Prostate gland (tissue), 2 donors: ENCODE measurements at regions of chr5 and their contacts with region 1.

Region 1: GRCh38 chr5:132820162-132820754 is 7.2 kb downstream of the SOWAHA start:
- DNase-seq: peak; percentile 92
- H3K4me3 ChIP-seq: no peak overlapping the region
- H3K27ac ChIP-seq: no peak overlapping the region
- H3K4me1 ChIP-seq: peaks cover 6% of the 10 kb centered on the region
- H3K27me3 ChIP-seq: no peaks in the 10 kb centered on the region
- CTCF ChIP-seq: peak; percentile 80 to 96 (median 93)
- POLR2A ChIP-seq: no peak

Region 2: DNA sequence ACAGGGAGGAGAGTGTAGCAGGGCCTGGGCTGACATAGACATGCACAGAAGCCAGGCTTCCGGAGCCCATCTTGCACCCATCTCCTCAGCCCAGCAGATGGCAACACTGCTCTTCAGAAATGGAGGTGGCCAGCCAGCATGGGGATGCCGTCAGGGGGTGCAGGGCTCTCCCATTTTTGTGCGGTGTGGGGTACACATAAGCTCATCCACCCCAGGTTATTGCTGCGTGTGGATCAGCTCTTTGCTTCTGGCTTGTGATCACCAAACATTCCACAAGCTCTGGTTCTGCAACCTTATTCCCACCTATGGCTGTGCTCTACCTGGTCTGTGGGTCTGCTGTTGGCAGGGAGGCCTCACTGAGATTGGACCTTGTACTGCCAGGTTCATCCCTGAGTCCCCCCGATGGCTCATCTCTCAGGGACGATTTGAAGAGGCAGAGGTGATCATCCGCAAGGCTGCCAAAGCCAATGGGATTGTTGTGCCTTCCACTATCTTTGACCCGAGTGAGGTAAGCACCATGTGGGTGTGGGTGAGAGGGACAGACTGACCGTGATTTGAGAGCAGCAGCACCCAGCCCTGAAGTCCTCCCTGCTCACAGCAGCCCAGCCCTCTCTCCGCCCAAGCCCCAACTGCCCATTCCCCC is 433.5 kb before region 1 on chr5:
- intact Hi-C with region 1: loop called (anchors 5 kb)
- DNase-seq: peak; percentile 68
- H3K4me3 ChIP-seq: no peak overlapping the region
- H3K27ac ChIP-seq: peak overlapping the region; percentile 89 to 92
- H3K4me1 ChIP-seq: peaks cover 31% of the 10 kb centered on the region
- H3K27me3 ChIP-seq: no peaks in the 10 kb centered on the region
- CTCF ChIP-seq: peak; percentile 67 to 93 (median 87)
- POLR2A ChIP-seq: no peak

Region 3: DNA sequence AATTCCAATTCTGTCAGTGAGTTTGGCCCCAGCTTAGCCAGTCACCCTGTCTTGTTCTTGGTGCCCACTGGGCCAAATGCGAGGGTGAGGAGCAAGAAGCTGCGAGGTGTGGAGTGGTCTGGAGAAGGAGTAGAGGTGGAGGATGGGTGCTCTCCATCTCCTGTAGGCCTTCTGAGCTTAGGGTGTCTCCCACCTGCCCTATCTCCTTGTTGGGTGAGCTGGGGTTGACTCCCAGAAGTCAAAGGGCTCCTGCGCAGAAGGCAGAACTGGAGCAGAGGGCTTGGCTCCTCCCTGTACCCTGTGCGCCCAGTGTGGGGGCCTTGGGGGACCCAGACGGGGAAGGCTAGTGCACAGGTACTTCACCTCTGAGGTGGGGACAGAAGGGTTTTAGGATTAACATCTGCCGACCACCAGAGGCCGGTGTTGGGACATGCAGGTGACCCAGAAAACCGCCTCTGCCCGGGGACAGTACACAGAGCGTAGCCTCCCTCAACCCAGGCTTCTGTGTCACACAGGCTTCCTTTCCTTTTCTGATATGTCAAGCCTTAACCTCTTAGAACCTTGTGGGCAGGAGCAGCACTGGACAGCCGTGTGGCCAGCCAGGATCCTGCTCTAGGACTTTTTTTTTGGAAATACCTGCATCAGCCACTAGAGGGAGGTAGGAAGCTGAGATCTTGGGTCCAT is 293.8 kb before region 1 on chr5:
- intact Hi-C with region 1: loop called (anchors 10 kb)
- DNase-seq: peak; percentile 31
- H3K4me3 ChIP-seq: no peak overlapping the region
- H3K27ac ChIP-seq: no peak overlapping the region
- H3K4me1 ChIP-seq: no peaks in the 10 kb centered on the region
- H3K27me3 ChIP-seq: no peaks in the 10 kb centered on the region
- CTCF ChIP-seq: peak; percentile 69 to 85 (median 72)
- POLR2A ChIP-seq: no peak

Region 4: GRCh38 chr5:132688536-132689339 is 131.5 kb before region 1 on chr5:
- intact Hi-C with region 1: no loop called
- DNase-seq: no peak
- H3K4me3 ChIP-seq: no peak overlapping the region
- H3K27ac ChIP-seq: no peak overlapping the region
- H3K4me1 ChIP-seq: no peaks in the 10 kb centered on the region
- H3K27me3 ChIP-seq: no peaks in the 10 kb centered on the region
- CTCF ChIP-seq: no peak
- POLR2A ChIP-seq: no peak

Region 5: DNA sequence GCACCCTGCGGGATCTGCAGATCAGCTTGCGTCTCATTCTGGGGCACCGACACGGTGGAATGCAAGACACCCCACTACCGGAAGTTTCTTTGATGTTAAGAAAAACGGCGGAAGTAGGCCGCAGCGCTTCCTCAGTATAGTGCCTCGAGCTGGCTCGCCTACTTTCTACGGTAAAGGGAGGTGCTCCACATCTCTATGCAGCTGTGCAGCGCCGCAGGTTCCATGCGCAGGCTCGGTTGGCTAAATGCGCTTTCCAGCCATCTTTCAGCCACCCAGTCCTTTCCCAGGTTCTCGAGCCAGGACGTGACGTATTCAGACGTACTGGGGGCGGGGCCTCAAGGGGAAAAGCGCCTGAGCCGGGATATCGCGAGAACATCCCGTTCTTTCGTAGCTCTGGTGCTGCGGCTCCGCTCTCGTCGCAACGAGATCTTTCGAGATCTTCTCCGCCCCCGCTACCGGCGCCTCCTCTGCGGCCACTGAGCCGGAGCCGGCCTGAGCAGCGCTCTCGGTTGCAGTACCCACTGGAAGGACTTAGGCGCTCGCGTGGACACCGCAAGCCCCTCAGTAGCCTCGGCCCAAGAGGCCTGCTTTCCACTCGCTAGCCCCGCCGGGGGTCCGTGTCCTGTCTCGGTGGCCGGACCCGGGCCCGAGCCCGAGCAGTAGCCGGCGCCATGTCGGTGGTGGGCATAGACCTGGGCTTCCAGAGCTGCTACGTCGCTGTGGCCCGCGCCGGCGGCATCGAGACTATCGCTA is 231.5 kb after region 1 on chr5 and contains the start of gene HSPA4:
- intact Hi-C with region 1: loop called (anchors 10 kb)
- DNase-seq: peak; percentile 98
- H3K4me3 ChIP-seq: peak within 1 kb of the TSS; percentile 94 to 95
- H3K27ac ChIP-seq: peak within 1 kb of the TSS; percentile 100
- H3K4me1 ChIP-seq: peaks cover 3% of the 10 kb centered on the region
- H3K27me3 ChIP-seq: no peaks in the 10 kb centered on the region
- CTCF ChIP-seq: peak in 1 of 4 experiments; percentile 7
- POLR2A ChIP-seq: peak; percentile 95
- total RNA-seq, gene HSPA4: 51.1 to 73.5 TPM